Mucosa of descending colon (tissue), 3 donors: ENCODE measurements at regions of chr3 and their contacts with region 1.

Region 1: GRCh38 chr3:58008140-58009025 is at the start of gene FLNB:
- DNase-seq: peak; percentile 84 to 90 (median 85)
- ATAC-seq: peak; percentile 76
- H3K4me3 ChIP-seq: peak within 1 kb of the TSS; percentile 93
- H3K4me1 ChIP-seq: peaks cover 29% of the 10 kb centered on the region
- CTCF ChIP-seq: peak; percentile 73
- total RNA-seq, gene FLNB: 256 to 555 (median 357) TPM

Region 2: GRCh38 chr3:58167431-58168351 is 159.3 kb after region 1 on chr3:
- intact Hi-C with region 1: loop called in 1 of 2 experiments (anchors 10 kb)
- DNase-seq: peak; percentile 60 to 78 (median 74)
- ATAC-seq: peak; percentile 80
- H3K4me3 ChIP-seq: no peak overlapping the region
- H3K4me1 ChIP-seq: peaks cover under 1% of the 10 kb centered on the region
- CTCF ChIP-seq: peak; percentile 93